Dorsolateral prefrontal cortex (tissue), 120 donors: ENCODE measurements at regions of chr21 and their contacts with region 1.

Region 1: GRCh38 chr21:42939582-42940410 is 14.4 kb upstream of the ERVH48-1 start:
- DNase-seq: peak in 8 of 10 donors; percentile 9 to 91 (median 70)
- H3K4me3 ChIP-seq: peak overlapping the region in 53 of 59 donors; percentile 0 to 58 (median 28)
- H3K27ac ChIP-seq: peak overlapping the region in 58 of 59 donors; percentile 16 to 92 (median 82)
- H3K27me3 ChIP-seq: no peaks in the 10 kb centered on the region
- CTCF ChIP-seq: peak in 3 of 56 donors; percentile 3 to 33 (median 12)

Region 2: DNA sequence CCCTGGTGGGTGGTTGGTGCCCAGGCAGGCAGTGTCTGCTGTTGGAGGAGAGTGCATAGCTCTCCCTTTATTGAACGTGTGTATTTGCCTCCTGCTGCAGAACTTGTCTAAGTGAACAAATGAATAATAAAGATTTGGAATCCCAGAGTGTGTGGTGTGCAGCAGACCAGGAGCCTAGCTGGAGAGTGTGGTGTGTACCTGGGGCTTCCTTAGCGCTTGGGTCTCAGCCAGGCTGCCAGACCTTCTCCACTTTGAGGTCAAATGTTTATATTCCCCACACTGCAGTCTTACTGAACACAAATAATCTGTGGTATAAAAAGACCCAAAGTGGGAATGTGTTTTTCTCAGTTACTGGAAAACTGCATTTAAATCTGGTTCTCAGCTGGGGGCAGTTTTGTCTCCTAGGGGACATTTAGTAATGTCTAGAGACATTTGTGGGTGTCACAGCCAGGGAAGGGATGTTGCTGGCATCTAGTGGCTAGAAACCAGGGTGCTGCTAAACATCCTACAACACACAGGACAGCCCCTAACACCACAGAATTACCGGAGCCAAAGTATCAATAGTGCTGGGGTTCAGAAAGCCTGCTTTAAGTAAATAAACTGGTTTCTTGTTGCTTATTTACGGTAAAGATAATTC is 402.6 kb before region 1 on chr21:
- intact Hi-C with region 1: no loop called
- DNase-seq: peak in 3 of 10 donors; percentile 33 to 38 (median 33)
- H3K4me3 ChIP-seq: no peak overlapping the region
- H3K27ac ChIP-seq: peak overlapping the region in 1 of 59 donors; percentile 8
- H3K27me3 ChIP-seq: no peaks in the 10 kb centered on the region
- CTCF ChIP-seq: peak in 53 of 56 donors; percentile 13 to 66 (median 41)

Region 3: GRCh38 chr21:42991992-42992740 is 52.4 kb after region 1 on chr21:
- intact Hi-C with region 1: loop called in 1 of 2 experiments (anchors 10 kb)
- DNase-seq: peak in 1 of 10 donors; percentile 21
- H3K4me3 ChIP-seq: no peak overlapping the region
- H3K27ac ChIP-seq: peak overlapping the region in 35 of 59 donors; percentile 4 to 83 (median 49)
- H3K27me3 ChIP-seq: no peaks in the 10 kb centered on the region
- CTCF ChIP-seq: no peak

Region 4: GRCh38 chr21:43574741-43575472 is 635.1 kb after region 1 on chr21:
- intact Hi-C with region 1: no loop called
- DNase-seq: peak in 8 of 10 donors; percentile 30 to 68 (median 48)
- H3K4me3 ChIP-seq: no peak overlapping the region
- H3K27ac ChIP-seq: peak overlapping the region in 49 of 59 donors; percentile 1 to 84 (median 62)
- H3K27me3 ChIP-seq: no peaks in the 10 kb centered on the region
- CTCF ChIP-seq: no peak